HCT116 (cell line): ENCODE measurements at regions of chr3 and their contacts with region 1.

Region 1: GRCh38 chr3:12471243-12471651 is 13.0 kb upstream of the TSEN2 start:
- DNase-seq: peak; percentile 92
- ATAC-seq: peak; percentile 91
- H3K4me3 ChIP-seq: peak overlapping the region in 1 of 2 experiments; percentile 38; a peak in 2 of 4 replicates
- H3K27ac ChIP-seq: peak overlapping the region; percentile 72
- H3K4me1 ChIP-seq: peaks cover 26 to 54% of the 10 kb centered on the region in 2 experiments
- H3K27me3 ChIP-seq: no peaks in the 10 kb centered on the region
- CTCF ChIP-seq: peak in 2 of 3 experiments; percentile 28 to 37; a peak in 3 of 6 replicates
- POLR2A ChIP-seq: no peak
- RAD21 ChIP-seq: peak; percentile 83

Region 2: DNA sequence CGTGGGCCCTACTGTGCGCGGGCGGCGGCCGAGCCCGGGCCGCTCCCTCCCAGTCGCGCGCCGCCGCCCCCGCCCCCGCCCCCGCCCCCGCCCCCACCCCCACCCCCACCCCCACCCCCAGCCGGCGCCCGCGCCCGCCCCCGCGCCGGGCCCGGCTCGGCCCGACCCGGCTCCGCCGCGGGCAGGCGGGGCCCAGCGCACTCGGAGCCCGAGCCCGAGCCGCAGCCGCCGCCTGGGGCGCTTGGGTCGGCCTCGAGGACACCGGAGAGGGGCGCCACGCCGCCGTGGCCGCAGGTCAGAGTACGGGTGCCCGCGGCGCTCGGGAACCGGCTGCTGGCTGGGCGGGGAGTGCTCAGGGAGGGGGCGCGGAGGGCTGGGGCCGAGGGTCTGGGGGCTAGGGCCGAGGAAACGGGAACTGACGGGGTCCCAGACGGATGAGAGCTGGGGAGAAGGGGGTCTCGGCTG is 183.5 kb before region 1 on chr3:
- CTCF ChIA-PET with region 1: no interaction called
- POLR2A ChIA-PET with region 1: no interaction called
- RAD21 ChIA-PET with region 1: no interaction called
- intact Hi-C with region 1: loop called (anchors 5 kb)
- DNase-seq: no peak
- ATAC-seq: peak; percentile 64
- H3K4me3 ChIP-seq: peak overlapping the region; percentile 71 to 73
- H3K27ac ChIP-seq: peak overlapping the region; percentile 87
- H3K4me1 ChIP-seq: peaks cover 10 to 24% of the 10 kb centered on the region in 2 experiments; a peak in 3 of 4 replicates
- H3K27me3 ChIP-seq: no peaks in the 10 kb centered on the region
- CTCF ChIP-seq: no peak
- POLR2A ChIP-seq: no peak
- RAD21 ChIP-seq: peak; percentile 39; the same call in 1 of the 2 replicates

Region 3: DNA sequence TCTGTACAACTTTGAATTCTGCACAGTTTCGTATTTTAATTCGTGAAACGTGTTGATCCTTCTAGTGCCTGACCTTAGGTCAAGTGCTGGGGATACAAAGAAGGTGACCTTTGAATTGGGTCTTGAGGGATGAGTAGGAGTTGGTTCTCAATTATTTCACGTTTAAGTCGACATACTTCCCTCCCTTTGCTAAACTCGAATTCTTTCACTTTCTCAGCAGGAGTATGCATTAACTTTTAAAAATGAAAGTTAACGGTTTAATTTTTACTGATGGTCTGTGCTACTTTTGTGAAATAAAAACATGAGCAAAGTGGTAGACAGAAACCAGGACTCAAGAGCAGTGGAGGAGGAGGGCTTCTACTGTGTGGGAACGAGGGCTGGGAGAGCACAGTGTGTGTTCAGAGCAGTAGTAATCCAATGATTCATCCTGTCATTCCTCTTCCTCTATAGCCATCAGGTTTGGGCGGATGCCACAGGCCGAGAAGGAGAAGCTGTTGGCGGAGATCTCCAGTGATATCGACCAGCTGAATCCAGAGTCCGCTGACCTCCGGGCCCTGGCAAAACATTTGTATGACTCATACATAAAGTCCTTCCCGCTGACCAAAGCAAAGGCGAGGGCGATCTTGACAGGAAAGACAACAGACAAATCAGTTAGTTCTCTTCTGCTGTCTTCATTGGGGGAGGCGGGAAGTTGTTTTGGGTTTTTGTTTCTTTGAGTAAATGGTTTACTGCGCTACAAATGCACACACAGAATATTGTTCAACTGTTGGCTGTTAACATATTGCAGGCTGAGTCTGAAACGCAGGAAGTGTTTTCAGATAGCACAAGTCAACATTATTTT is 65.6 kb before region 1 on chr3:
- CTCF ChIA-PET with region 1: no interaction called
- POLR2A ChIA-PET with region 1: no interaction called
- RAD21 ChIA-PET with region 1: no interaction called
- intact Hi-C with region 1: loop called (anchors 5 kb)
- DNase-seq: peak; percentile 92
- ATAC-seq: peak; percentile 97
- H3K4me3 ChIP-seq: peak overlapping the region; percentile 6 to 42; a peak in 3 of 4 replicates
- H3K27ac ChIP-seq: peak overlapping the region; percentile 48
- H3K4me1 ChIP-seq: peaks cover 28 to 47% of the 10 kb centered on the region in 2 experiments
- H3K27me3 ChIP-seq: no peaks in the 10 kb centered on the region
- CTCF ChIP-seq: no peak
- POLR2A ChIP-seq: no peak
- RAD21 ChIP-seq: peak; percentile 45

Region 4: DNA sequence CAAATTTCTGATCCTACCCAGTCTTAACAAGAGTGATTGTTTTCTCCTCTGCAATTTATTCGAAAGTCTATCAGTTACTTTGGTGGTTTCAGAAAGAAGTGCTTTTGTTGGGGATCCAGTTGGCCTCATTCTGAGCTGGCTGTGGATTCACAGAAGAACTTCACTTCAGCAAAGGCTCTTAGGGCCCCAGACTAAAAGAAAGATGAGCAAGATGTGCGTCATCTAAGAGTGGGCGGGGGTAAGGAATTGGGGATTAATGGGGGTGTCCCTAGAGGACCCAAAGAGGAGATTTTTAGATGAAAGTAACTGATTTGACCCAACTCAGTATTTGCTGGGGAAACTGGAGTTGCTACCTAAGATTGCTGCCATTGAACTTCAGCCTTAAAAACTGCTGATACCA is 50.9 kb before region 1 on chr3:
- CTCF ChIA-PET with region 1: no interaction called
- POLR2A ChIA-PET with region 1: no interaction called
- RAD21 ChIA-PET with region 1: no interaction called
- intact Hi-C with region 1: no loop called
- DNase-seq: no peak
- ATAC-seq: no peak
- H3K4me3 ChIP-seq: no peak overlapping the region
- H3K27ac ChIP-seq: no peak overlapping the region
- H3K4me1 ChIP-seq: peaks cover 18 to 38% of the 10 kb centered on the region in 2 experiments
- H3K27me3 ChIP-seq: no peaks in the 10 kb centered on the region
- CTCF ChIP-seq: no peak
- POLR2A ChIP-seq: no peak
- RAD21 ChIP-seq: no peak

Region 5: DNA sequence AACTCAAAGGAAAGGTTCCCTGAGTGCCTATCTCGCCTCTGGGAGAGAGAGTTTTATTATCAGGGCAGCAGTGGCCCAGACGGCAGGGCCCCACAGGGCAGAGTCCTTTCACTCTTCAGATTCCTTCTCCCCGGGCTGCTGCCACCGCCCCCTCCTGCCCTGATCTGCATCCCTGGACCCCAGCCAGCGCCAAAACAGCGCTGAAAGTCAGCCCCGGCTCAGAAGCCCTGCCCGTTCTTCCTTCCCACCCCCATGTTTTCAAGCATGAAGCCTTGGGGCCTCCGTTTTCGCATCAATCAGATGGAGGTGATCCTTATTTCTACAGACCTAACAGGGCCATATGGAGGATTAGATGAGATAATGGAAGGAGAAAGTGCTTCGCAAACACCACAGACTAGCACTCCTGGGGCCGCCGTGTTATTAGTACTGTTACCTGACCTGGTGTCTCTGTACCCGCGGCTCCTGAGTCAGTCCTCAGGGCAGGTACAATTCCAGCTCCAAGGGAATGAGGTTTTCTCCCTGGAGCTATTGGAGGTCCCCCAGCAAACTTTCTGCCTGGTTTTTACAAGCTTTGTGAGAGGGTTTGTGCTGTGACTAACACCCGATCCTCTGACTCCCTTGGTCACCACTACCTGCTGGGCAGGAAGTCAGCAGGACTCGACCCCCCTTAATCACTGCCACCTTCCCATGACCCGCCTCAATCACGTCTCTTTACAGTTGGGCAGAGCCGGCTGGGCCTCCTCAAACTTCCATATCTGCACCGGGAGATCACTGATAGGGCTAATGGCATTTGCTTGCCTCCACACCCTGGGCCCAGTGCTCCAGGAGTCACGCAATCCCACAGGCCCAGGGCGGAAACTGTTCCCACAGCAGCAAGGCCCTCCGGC is 26.4 kb before region 1 on chr3:
- CTCF ChIA-PET with region 1: no interaction called
- POLR2A ChIA-PET with region 1: no interaction called
- RAD21 ChIA-PET with region 1: no interaction called
- intact Hi-C with region 1: loop called (anchors 1 kb)
- DNase-seq: peak; percentile 88
- ATAC-seq: peak; percentile 87
- H3K4me3 ChIP-seq: peak overlapping the region; percentile 36 to 47
- H3K27ac ChIP-seq: peak overlapping the region; percentile 89
- H3K4me1 ChIP-seq: peaks cover 30 to 68% of the 10 kb centered on the region in 2 experiments
- H3K27me3 ChIP-seq: no peaks in the 10 kb centered on the region
- CTCF ChIP-seq: no peak
- POLR2A ChIP-seq: no peak
- RAD21 ChIP-seq: no peak

Region 6: GRCh38 chr3:12495749-12496452 is 24.7 kb after region 1 on chr3:
- CTCF ChIA-PET with region 1: no interaction called
- POLR2A ChIA-PET with region 1: no interaction called
- RAD21 ChIA-PET with region 1: no interaction called
- intact Hi-C with region 1: no loop called
- DNase-seq: no peak
- ATAC-seq: peak; percentile 65
- H3K4me3 ChIP-seq: no peak overlapping the region
- H3K27ac ChIP-seq: no peak overlapping the region
- H3K4me1 ChIP-seq: no peaks in the 10 kb centered on the region
- H3K27me3 ChIP-seq: no peaks in the 10 kb centered on the region
- CTCF ChIP-seq: peak in 2 of 3 experiments; percentile 37 to 56; a peak in 4 of 6 replicates
- POLR2A ChIP-seq: no peak
- RAD21 ChIP-seq: peak; percentile 32

Region 7: GRCh38 chr3:12541631-12542030 is 70.4 kb after region 1 on chr3:
- CTCF ChIA-PET with region 1: no interaction called
- POLR2A ChIA-PET with region 1: no interaction called
- RAD21 ChIA-PET with region 1: no interaction called
- intact Hi-C with region 1: no loop called
- DNase-seq: no peak
- ATAC-seq: peak; percentile 41; the same call in 1 of the 2 replicates
- H3K4me3 ChIP-seq: no peak overlapping the region
- H3K27ac ChIP-seq: no peak overlapping the region
- H3K4me1 ChIP-seq: peaks cover 0 to 7% of the 10 kb centered on the region in 2 experiments; a peak in 1 of 4 replicates
- H3K27me3 ChIP-seq: no peaks in the 10 kb centered on the region
- CTCF ChIP-seq: peak in 2 of 3 experiments; percentile 23 to 31; a peak in 2 of 6 replicates
- POLR2A ChIP-seq: no peak
- RAD21 ChIP-seq: 0 out of 2 replicates have a peak, but pooled peaks have one; percentile 11

Region 8: GRCh38 chr3:13419505-13420044 is 948.3 kb after region 1 on chr3:
- CTCF ChIA-PET with region 1: no interaction called
- POLR2A ChIA-PET with region 1: no interaction called
- RAD21 ChIA-PET with region 1: no interaction called
- intact Hi-C with region 1: no loop called
- DNase-seq: no peak
- ATAC-seq: peak; percentile 65
- H3K4me3 ChIP-seq: peak overlapping the region; percentile 67
- H3K27ac ChIP-seq: peak overlapping the region; percentile 86
- H3K4me1 ChIP-seq: peaks cover 21 to 59% of the 10 kb centered on the region in 2 experiments
- H3K27me3 ChIP-seq: no peaks in the 10 kb centered on the region
- CTCF ChIP-seq: 0 out of 6 replicates have a peak, but pooled peaks of 2 of the 3 experiments have one; percentile 4 to 5
- POLR2A ChIP-seq: no peak
- RAD21 ChIP-seq: no peak